Breast epithelium (tissue), 4 donors: ENCODE measurements at regions of chr2 and their contacts with region 1.

Region 1: DNA sequence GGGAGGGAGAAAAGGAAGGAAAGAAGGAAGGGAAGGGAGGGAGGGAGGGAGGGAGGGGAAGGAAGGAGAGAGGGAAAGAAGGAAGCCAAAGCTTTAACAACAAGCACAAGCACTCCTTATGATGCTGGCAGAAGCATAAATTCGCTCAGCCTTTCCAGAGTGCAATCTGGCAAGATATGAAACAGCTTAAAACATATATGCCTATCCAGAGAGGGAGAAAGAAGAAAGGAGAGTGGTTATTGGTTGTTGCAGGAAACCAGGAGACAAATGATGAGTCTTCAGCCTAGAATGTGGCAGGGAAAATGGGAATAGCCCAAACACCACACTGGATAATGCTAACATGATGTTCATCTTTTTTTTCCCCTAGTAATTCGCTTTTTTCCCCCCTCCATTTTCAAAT is 64.0 kb downstream of the STPG4 start:
- DNase-seq: no peak
- H3K4me3 ChIP-seq: no peak overlapping the region
- H3K27ac ChIP-seq: no peak overlapping the region
- H3K4me1 ChIP-seq: peaks cover 7 to 11% of the 10 kb centered on the region in 2 donors
- H3K27me3 ChIP-seq: no peaks in the 10 kb centered on the region
- CTCF ChIP-seq: no peak
- POLR2A ChIP-seq: no peak

Region 2: DNA sequence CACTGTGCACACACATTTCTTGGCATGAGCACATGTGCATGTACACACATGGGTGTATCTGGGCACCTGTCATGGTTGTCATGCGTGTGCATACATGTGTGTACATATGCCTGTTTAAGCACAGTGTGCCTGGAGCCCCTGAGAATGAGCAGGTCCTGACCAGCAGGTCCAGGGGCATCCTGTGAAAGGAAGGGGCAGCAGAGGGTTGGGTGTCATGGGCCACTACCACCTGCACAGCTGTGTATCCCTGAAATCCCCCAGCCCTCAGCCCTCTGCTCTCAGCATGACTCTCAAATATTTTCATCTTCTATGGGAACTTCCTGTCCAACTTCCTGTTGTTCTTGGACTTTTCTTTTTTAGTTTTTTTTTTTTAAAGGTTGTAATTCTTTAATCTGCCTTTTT is 890.9 kb before region 1 on chr2:
- intact Hi-C with region 1: no loop called
- DNase-seq: no peak
- H3K4me3 ChIP-seq: no peak overlapping the region
- H3K27ac ChIP-seq: no peak overlapping the region
- H3K4me1 ChIP-seq: no peaks in the 10 kb centered on the region
- H3K27me3 ChIP-seq: no peaks in the 10 kb centered on the region
- CTCF ChIP-seq: no peak
- POLR2A ChIP-seq: no peak

Region 3: DNA sequence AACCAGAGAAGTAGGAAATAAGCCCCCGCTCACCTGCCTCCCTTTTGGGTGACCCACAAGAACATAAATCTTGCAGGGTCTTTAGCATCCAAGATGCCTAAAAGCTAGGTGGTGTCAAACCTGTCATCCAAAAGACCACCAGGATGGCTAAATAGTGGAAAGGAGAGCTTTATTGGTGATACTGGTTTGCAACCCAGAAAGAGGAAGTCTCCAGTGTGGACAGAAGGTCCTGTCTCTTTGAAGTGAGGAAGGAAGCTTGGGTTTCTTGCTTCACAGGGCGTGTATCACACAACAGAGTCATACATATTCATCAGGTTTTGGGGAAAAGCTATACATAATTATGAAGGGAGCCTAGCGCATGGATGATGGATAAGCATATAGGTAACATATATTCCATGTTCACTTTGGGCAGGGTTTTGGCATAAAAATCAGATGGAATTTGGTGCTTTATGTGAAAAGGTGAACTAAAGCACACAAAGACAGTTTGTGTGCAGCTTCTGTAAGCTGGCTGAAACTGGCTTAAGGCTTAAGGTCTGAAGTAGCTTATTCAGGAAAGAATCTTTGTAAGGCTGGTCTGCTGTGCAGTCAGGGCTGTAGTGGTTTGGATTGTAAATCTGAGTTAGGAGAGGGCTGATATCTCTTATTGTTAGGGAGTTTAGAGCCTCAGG is 209.6 kb after region 1 on chr2:
- intact Hi-C with region 1: no loop called
- DNase-seq: no peak
- H3K4me3 ChIP-seq: no peak overlapping the region
- H3K27ac ChIP-seq: peak overlapping the region in 1 of 2 donors; percentile 8
- H3K4me1 ChIP-seq: peaks cover 0 to 12% of the 10 kb centered on the region in 2 donors
- H3K27me3 ChIP-seq: no peaks in the 10 kb centered on the region
- CTCF ChIP-seq: no peak
- POLR2A ChIP-seq: no peak

Region 4: DNA sequence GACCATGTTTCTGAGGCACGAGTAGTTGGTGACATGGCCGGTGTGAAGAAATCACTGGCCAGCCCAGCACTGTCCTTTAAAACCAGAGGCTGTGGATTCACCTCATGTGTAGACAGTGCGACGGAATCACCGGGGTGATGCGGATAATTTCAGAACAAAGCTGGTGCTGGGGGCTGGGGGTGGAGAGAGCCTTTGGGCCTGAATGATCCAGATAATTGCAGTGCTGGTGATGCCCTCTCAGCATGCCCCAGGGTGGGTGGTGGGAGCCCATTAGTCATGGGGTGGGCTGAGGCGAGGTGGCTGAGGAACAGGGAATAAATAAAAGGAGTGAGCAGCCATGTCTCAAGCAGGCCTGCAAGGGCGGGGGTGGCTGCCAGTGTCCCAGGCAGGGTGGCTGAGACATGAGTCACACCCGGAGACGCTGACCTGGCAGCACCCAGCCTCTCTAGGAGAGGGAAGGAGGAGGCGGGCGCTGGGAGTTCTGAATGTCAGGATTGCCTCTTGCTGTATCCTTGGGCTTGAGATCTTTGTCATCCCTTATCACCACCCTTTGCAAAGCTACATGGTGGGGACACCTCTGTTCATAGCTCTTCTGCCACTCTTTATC is 540.8 kb after region 1 on chr2:
- intact Hi-C with region 1: loop called (anchors 5 kb)
- DNase-seq: peak in 1 of 2 donors; percentile 23
- H3K4me3 ChIP-seq: no peak overlapping the region
- H3K27ac ChIP-seq: no peak overlapping the region
- H3K4me1 ChIP-seq: no peaks in the 10 kb centered on the region
- H3K27me3 ChIP-seq: no peaks in the 10 kb centered on the region
- CTCF ChIP-seq: no peak
- POLR2A ChIP-seq: no peak